Caco-2 (cell line): ENCODE measurements at regions of chr9 and their contacts with region 1.

Region 1: DNA sequence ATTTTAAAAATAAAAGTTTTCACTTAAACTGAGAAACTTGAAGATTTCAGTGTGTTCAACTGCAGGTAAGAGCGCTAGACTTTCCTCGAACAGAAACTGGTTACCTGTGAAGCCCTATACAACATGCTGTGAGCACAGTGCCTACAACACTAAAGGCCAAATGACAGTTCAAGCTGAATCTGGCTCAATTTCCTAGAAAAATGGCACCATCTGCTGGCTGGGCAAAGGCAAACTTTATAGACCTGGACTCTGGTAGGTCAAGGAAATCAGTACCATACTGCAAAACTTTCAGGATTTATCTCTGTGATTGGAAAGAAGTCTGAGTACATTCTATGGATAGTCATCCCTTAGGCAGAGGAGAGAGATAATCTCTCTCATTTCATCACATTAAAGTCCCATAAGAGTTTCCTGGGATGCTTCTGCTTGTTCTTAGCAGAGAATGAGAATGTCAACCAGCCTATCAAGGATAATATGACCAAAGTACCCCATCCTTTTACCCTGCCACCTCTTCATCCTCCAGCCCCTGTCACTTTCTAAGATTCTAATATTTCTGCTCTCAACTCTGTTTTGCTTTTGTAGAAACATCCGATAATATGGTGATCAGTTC is 31.8 kb upstream of the FOXB2 start:
- DNase-seq: peak; percentile 23 to 25
- H3K4me3 ChIP-seq: no peak overlapping the region
- H3K4me3 Mint-ChIP-seq: no peak overlapping the region
- H3K27ac Mint-ChIP-seq: no peak overlapping the region
- H3K4me1 ChIP-seq: no peaks in the 10 kb centered on the region
- H3K4me1 Mint-ChIP-seq: no peaks in the 10 kb centered on the region
- H3K27me3 ChIP-seq: no peaks in the 10 kb centered on the region
- H3K27me3 Mint-ChIP-seq: no peaks in the 10 kb centered on the region
- CTCF ChIP-seq: no peak

Region 2: DNA sequence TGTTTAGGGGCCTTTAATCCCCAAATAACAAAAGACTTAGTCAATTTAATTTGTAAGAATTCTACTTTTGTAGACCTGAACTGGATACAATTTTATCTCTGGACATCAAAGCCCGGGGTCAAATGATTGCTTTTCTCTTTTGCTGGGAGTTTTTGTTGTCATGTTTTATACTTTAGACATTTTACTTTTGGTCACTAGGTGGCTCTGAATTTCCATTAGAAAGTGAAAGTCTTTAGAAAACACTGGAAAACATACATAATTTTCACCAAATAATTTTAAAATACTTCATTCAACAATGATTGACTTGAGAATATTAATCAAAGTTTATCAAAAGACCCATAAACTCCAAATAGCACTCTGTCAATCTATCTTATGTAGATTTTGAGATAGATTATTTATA is 226.2 kb before region 1 on chr9:
- CTCF ChIA-PET with region 1: no interaction called
- POLR2A ChIA-PET with region 1: no interaction called
- intact Hi-C with region 1: loop called (anchors 1 kb)
- DNase-seq: no peak
- H3K4me3 ChIP-seq: no peak overlapping the region
- H3K4me3 Mint-ChIP-seq: no peak overlapping the region
- H3K27ac Mint-ChIP-seq: no peak overlapping the region
- H3K4me1 ChIP-seq: no peaks in the 10 kb centered on the region
- H3K4me1 Mint-ChIP-seq: peaks cover 5% of the 10 kb centered on the region
- H3K27me3 ChIP-seq: no peaks in the 10 kb centered on the region
- H3K27me3 Mint-ChIP-seq: no peaks in the 10 kb centered on the region
- CTCF ChIP-seq: no peak

Region 3: GRCh38 chr9:76810377-76810957 is 177.2 kb before region 1 on chr9:
- CTCF ChIA-PET with region 1: interaction called, 3 read pairs
- POLR2A ChIA-PET with region 1: no interaction called
- intact Hi-C with region 1: loop called (anchors 1 kb)
- DNase-seq: peak; percentile 23 to 36
- H3K4me3 ChIP-seq: no peak overlapping the region
- H3K4me3 Mint-ChIP-seq: no peak overlapping the region
- H3K27ac Mint-ChIP-seq: no peak overlapping the region
- H3K4me1 ChIP-seq: no peaks in the 10 kb centered on the region
- H3K4me1 Mint-ChIP-seq: no peaks in the 10 kb centered on the region
- H3K27me3 ChIP-seq: no peaks in the 10 kb centered on the region
- H3K27me3 Mint-ChIP-seq: no peaks in the 10 kb centered on the region
- CTCF ChIP-seq: peak; percentile 10 to 33

Region 4: GRCh38 chr9:76893395-76893932 is 94.2 kb before region 1 on chr9:
- CTCF ChIA-PET with region 1: no interaction called
- POLR2A ChIA-PET with region 1: no interaction called
- intact Hi-C with region 1: loop called (anchors 5 kb)
- DNase-seq: no peak
- H3K4me3 ChIP-seq: no peak overlapping the region
- H3K4me3 Mint-ChIP-seq: no peak overlapping the region
- H3K27ac Mint-ChIP-seq: no peak overlapping the region
- H3K4me1 ChIP-seq: no peaks in the 10 kb centered on the region
- H3K4me1 Mint-ChIP-seq: no peaks in the 10 kb centered on the region
- H3K27me3 ChIP-seq: no peaks in the 10 kb centered on the region
- H3K27me3 Mint-ChIP-seq: no peaks in the 10 kb centered on the region
- CTCF ChIP-seq: no peak

Region 5: DNA sequence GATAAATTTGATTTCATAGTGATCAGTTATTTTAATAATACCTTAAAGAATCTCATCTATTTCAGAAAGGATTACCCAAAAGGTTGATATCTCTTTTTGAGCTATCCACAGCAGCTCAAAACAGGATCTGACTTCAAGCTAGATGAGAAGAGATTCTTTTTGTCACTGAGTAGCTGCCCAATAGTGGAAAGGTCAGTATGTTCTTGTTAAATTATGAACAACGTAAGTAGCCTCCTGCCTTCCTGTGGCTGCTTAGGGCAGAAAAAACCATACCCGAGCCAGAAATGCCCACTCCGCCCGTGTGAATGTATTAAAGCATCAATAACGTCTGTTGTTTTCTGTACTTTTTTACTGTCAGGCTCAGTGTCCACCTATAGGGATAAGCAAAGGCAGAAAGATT is 30.4 kb before region 1 on chr9:
- CTCF ChIA-PET with region 1: no interaction called
- POLR2A ChIA-PET with region 1: no interaction called
- intact Hi-C with region 1: no loop called
- DNase-seq: no peak
- H3K4me3 ChIP-seq: no peak overlapping the region
- H3K4me3 Mint-ChIP-seq: no peak overlapping the region
- H3K27ac Mint-ChIP-seq: no peak overlapping the region
- H3K4me1 ChIP-seq: no peaks in the 10 kb centered on the region
- H3K4me1 Mint-ChIP-seq: no peaks in the 10 kb centered on the region
- H3K27me3 ChIP-seq: no peaks in the 10 kb centered on the region
- H3K27me3 Mint-ChIP-seq: no peaks in the 10 kb centered on the region
- CTCF ChIP-seq: no peak